ENCODE measurements at regions of chr5 and their contacts with region 1.

Region 1: DNA sequence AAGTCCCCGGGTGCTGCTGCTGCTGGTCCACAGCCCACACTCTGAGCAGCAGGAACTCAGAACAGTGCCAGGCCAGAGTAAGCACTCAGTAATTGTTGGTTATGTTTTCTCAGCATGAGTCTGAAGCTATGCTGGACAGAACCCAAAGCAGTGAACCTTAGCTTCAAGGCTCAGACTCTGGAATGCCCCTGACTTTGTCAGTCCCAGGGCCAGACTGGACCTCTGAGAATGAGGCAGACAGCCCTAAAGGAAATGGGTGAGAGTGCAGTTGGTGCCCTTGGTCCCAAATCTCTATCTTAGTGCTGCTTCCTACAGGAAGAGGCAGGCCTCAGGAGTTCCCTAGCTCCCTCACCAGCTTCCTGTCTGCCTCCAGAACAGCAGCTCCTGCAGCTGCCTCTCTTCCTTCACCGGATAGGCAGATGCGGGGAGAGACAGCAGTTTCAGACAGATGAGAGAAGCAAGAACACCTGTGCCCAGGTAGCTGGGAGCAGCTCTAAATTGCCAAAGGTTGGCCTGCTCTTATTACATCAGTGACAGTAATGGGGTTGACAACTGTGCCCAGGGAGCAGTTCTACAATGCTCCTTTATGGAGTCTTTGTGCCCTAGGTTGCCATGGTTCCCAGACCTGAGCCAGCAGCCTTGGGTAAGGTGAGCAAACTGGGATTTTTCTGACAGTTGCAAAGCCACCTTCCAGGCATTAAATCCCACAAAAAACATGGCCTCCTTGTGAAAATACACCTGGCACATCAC is 82.2 kb upstream of the CXCL14 start:
- DNase-seq: no peak
- H3K4me3 ChIP-seq: no peak overlapping the region
- H3K27ac ChIP-seq: no peak overlapping the region
- H3K4me1 ChIP-seq: peaks cover 0 to 5% (median 0%) of the 10 kb centered on the region in 4 experiments; a peak in 2 of 7 replicates
- H3K27me3 ChIP-seq: no peaks in the 10 kb centered on the region
- CTCF ChIP-seq: no peak
- EP300 ChIP-seq: no peak
- POLR2A ChIP-seq: no peak
- RAD21 ChIP-seq: no peak

Region 2: DNA sequence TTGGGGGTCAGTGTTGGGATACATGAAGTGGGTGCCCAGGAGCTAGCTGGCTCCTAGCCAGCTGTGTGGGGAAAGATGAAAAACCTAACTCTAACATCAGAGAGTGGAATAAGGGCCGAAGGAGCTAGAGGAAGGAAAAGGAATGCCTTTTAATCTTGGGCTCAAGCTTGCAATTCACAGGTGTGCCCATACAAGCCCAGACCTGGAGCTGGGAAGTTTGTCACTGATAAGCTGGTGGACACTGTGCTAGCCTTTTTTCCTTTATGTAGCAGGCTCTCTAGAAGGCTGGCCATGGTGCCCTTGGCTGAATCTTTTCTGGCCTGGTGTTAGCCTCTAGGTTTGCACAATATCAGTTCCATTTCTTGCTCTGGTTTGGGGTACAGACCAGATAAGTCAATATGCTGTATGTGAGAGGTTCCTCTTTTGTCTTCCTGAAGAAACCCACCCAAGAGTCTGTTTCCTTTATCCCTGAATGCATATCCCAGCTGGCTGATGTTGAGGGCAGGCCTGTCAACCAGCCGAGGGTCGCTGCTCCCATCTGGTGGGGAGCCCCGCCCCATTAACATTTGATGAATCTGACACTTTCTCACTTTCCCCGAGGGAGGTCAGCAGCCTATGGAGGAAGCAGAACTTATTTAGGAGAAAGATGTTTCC is 10.2 kb after region 1 on chr5:
- CTCF ChIA-PET with region 1: interaction called, 12 read pairs
- POLR2A ChIA-PET with region 1: no interaction called
- DNase-seq: no peak
- H3K4me3 ChIP-seq: no peak overlapping the region
- H3K27ac ChIP-seq: no peak overlapping the region
- H3K4me1 ChIP-seq: no peaks in the 10 kb centered on the region
- H3K27me3 ChIP-seq: no peaks in the 10 kb centered on the region
- CTCF ChIP-seq: no peak
- EP300 ChIP-seq: no peak
- POLR2A ChIP-seq: no peak
- RAD21 ChIP-seq: no peak

Measured in H1 (cell line).